PC-3 (cell line): ENCODE measurements at regions of chr1 and their contacts with region 1.

Region 1: DNA sequence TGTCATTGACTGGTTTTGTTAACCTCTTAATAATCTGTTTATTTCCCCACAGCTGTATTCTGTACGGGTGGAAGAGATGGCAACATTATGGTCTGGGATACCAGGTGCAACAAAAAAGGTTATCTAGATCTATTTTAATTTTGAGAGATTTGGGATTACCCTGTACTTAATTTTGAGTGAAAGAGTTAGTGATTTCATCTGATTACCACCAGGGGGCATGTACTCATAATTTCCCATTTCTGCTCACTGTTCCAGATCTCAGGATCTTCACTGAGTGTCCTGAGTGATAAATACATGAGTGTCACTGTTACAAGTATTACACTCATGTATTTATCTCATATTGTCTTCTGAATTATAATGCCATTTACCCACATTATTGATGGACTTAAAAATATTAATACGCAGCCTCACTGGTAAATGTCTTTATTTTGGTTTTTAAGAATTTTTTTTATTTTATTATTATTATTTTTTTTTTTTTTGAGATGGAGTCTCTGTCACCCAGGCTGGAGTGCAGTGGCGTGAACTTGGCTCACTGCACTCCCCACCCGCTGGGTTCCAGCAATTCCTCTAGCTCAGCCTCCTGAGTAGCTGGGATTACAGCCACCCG is 27.4 kb downstream of the DTL start:
- DNase-seq: peak; percentile 73
- ATAC-seq: peak; percentile 79
- H3K4me3 ChIP-seq: no peak overlapping the region
- H3K27ac ChIP-seq: no peak overlapping the region
- H3K4me1 ChIP-seq: peaks cover 18% of the 10 kb centered on the region
- H3K27me3 ChIP-seq: no peaks in the 10 kb centered on the region
- CTCF ChIP-seq: peak; percentile 96

Region 2: GRCh38 chr1:212012034-212012740 is 50.7 kb before region 1 on chr1:
- CTCF ChIA-PET with region 1: no interaction called
- POLR2A ChIA-PET with region 1: no interaction called
- intact Hi-C with region 1: loop called (anchors 2 kb)
- DNase-seq: peak; percentile 89
- ATAC-seq: peak; percentile 97
- H3K4me3 ChIP-seq: no peak overlapping the region
- H3K27ac ChIP-seq: no peak overlapping the region
- H3K4me1 ChIP-seq: peaks cover 3% of the 10 kb centered on the region; the same call in 1 of the 2 replicates
- H3K27me3 ChIP-seq: no peaks in the 10 kb centered on the region
- CTCF ChIP-seq: peak; percentile 99